Naive thymus-derived CD4-positive, alpha-beta T cell (primary cell): ENCODE measurements at regions of chr19 and their contacts with region 1.

Region 1: GRCh38 chr19:12139885-12140547 is at the start of gene ZNF20:
- DNase-seq: peak; percentile 68 to 90 (median 72)
- ATAC-seq: peak; percentile 95
- H3K4me3 ChIP-seq: peak within 1 kb of the TSS; percentile 74
- H3K4me3 Mint-ChIP-seq: peak within 1 kb of the TSS; percentile 82 to 96 (median 89)
- H3K27ac ChIP-seq: peak within 1 kb of the TSS; percentile 77
- H3K27ac Mint-ChIP-seq: peak within 1 kb of the TSS; percentile 40 to 96 (median 79)
- H3K4me1 ChIP-seq: peaks cover 18 to 24% of the 10 kb centered on the region in 2 donors
- H3K4me1 Mint-ChIP-seq: peaks cover 25 to 44% (median 35%) of the 10 kb centered on the region in 7 donors
- H3K27me3 ChIP-seq: no peaks in the 10 kb centered on the region
- H3K27me3 Mint-ChIP-seq: no peaks in the 10 kb centered on the region
- total RNA-seq, gene ZNF20: 1.2 to 6.7 (median 4.8) TPM

Region 2: GRCh38 chr19:10769533-10770491 is 1370.2 kb before region 1 on chr19:
- CTCF ChIA-PET with region 1: no interaction called
- POLR2A ChIA-PET with region 1: no interaction called
- intact Hi-C with region 1: no loop called
- DNase-seq: peak in 6 of 9 donors; percentile 21 to 49 (median 38)
- ATAC-seq: no peak
- H3K4me3 ChIP-seq: no peak overlapping the region
- H3K4me3 Mint-ChIP-seq: no peak overlapping the region
- H3K27ac ChIP-seq: peak overlapping the region; percentile 29
- H3K27ac Mint-ChIP-seq: peak overlapping the region in 8 of 9 donors; percentile 20 to 79 (median 68)
- H3K4me1 ChIP-seq: peaks cover 0 to 4% of the 10 kb centered on the region in 2 donors
- H3K4me1 Mint-ChIP-seq: peaks cover 14 to 42% (median 32%) of the 10 kb centered on the region in 7 donors
- H3K27me3 ChIP-seq: no peaks in the 10 kb centered on the region
- H3K27me3 Mint-ChIP-seq: no peaks in the 10 kb centered on the region

Region 3: DNA sequence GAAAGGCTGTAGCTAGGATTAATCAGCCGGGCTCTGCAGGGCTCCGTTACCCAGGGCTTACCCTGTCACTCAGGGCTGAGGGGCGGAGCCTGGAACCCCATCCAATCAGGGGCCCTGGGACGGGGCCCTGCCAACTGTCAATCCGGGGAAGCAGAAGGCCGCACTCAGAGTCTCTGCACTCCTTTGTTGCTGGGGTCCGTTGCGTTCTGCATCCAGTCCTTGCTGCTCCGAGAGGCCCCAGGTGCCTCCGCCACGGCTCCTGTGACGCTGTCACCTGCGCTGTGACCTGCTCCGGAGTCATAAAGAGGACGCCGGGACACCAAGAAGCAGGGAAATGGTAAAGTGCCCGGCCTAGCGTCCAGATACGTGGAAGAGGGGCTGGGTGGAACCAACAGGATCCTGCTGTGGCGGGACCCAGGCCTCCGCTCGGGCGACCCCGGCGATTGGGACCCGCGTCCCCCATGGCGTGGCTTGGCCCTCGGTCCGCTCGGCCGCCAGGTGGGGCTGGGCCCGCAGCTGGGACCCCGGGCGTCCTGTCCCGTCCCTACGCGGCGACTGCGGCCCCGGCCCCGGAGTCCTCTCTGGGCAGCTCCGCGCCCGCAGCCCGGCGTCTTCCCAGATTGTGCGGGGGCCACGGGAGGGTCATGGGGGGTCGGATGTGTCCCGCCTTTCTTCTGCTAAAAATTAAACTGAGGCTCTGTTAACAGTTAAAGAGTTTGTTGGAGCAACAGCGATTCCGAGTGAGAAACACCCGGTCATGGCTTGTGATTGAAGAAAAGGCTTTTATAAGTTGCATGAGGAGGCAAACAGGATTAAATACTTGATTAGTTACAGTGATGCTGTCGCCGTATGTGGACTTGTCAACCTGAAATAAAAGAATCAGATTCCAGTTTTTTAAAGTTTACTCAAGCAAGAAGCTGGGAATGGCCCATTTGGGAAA is 341.4 kb before region 1 on chr19 and contains the start of gene ZNF491:
- CTCF ChIA-PET with region 1: interaction called, 20 read pairs
- POLR2A ChIA-PET with region 1: no interaction called
- intact Hi-C with region 1: loop called in 1 of 2 experiments (anchors 1 kb)
- DNase-seq: peak; percentile 66 to 84 (median 79)
- ATAC-seq: peak; percentile 98
- H3K4me3 ChIP-seq: peak within 1 kb of the TSS; percentile 71
- H3K4me3 Mint-ChIP-seq: peak within 1 kb of the TSS; percentile 82 to 95 (median 92)
- H3K27ac ChIP-seq: peak within 1 kb of the TSS; percentile 82
- H3K27ac Mint-ChIP-seq: peak within 1 kb of the TSS; percentile 45 to 94 (median 91)
- H3K4me1 ChIP-seq: peaks cover 8 to 12% of the 10 kb centered on the region in 2 donors
- H3K4me1 Mint-ChIP-seq: peaks cover 12 to 29% (median 20%) of the 10 kb centered on the region in 7 donors
- H3K27me3 ChIP-seq: no peaks in the 10 kb centered on the region
- H3K27me3 Mint-ChIP-seq: no peaks in the 10 kb centered on the region
- total RNA-seq, gene ZNF491: 0.92 to 6.1 (median 1.9) TPM

Region 4: GRCh38 chr19:11887611-11888531 is 252.1 kb before region 1 on chr19 and contains the start of gene ZNF69:
- CTCF ChIA-PET with region 1: interaction called, 5 read pairs
- POLR2A ChIA-PET with region 1: no interaction called
- intact Hi-C with region 1: loop called in 1 of 2 experiments (anchors 1 kb)
- DNase-seq: peak; percentile 25 to 64 (median 55)
- ATAC-seq: peak; percentile 87
- H3K4me3 ChIP-seq: peak within 1 kb of the TSS; percentile 86
- H3K4me3 Mint-ChIP-seq: peak within 1 kb of the TSS; percentile 88 to 95 (median 94)
- H3K27ac ChIP-seq: peak within 1 kb of the TSS; percentile 71
- H3K27ac Mint-ChIP-seq: peak within 1 kb of the TSS; percentile 85 to 92 (median 90)
- H3K4me1 ChIP-seq: peaks cover 5 to 9% of the 10 kb centered on the region in 2 donors
- H3K4me1 Mint-ChIP-seq: peaks cover 20 to 42% (median 27%) of the 10 kb centered on the region in 7 donors
- H3K27me3 ChIP-seq: no peaks in the 10 kb centered on the region
- H3K27me3 Mint-ChIP-seq: peaks cover 0 to 3% (median 0%) of the 10 kb centered on the region in 5 donors
- total RNA-seq, gene ZNF69: 1.4 to 12.1 (median 5.0) TPM

Region 5: DNA sequence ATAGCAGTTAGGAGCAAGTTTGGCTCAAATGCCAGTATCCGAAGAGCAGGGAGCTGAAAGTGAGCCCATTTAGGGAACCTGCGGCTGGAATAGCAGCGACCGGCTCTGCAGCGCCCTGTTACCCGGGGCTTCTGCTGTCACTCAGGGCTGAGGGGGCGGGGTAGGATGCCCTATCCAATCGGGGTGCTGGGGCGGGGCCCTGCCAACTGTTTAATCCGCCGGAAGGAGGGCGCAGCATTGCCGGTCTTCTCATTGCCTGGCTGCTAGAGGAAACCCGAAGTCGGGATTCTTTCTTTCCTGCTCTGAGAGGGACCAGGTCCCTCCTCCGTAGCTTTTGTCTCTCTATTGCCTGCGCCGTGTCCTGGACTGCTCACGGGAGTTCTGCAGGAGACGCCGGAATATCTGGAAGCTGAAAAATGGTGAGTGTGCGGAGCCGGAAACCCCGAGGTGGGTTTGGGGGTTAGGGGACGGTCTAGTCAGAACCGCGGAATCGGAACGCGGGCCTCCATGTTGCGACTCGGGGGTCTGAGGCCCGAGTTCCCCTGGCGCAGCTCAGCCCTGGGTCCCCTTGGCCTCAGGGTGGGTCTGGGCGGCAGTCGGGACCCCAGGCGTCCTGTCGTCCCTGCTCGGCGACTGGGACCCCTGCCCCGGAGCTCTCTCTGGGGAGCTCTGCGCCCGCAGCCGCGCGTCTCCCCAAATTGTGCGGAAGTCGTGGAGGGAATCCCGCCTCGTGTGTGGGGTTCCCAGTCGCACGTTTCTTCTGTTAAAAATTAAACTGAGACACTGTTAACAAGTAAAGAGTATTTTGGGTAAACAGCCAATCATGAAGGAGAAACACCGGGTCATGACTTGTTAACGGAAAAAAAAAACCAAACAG is 152.4 kb before region 1 on chr19:
- CTCF ChIA-PET with region 1: no interaction called
- POLR2A ChIA-PET with region 1: interaction called, 3 read pairs
- intact Hi-C with region 1: loop called (anchors 1 kb)
- DNase-seq: peak; percentile 73 to 90 (median 87)
- ATAC-seq: peak; percentile 95
- H3K4me3 ChIP-seq: peak overlapping the region; percentile 98
- H3K4me3 Mint-ChIP-seq: peak overlapping the region; percentile 84 to 99 (median 96)
- H3K27ac ChIP-seq: peak overlapping the region; percentile 88
- H3K27ac Mint-ChIP-seq: peak overlapping the region; percentile 70 to 97 (median 96)
- H3K4me1 ChIP-seq: peaks cover 0 to 8% of the 10 kb centered on the region in 2 donors
- H3K4me1 Mint-ChIP-seq: peaks cover 15 to 39% (median 28%) of the 10 kb centered on the region in 7 donors
- H3K27me3 ChIP-seq: no peaks in the 10 kb centered on the region
- H3K27me3 Mint-ChIP-seq: peaks cover 0 to 2% (median 0%) of the 10 kb centered on the region in 5 donors

Region 6: DNA sequence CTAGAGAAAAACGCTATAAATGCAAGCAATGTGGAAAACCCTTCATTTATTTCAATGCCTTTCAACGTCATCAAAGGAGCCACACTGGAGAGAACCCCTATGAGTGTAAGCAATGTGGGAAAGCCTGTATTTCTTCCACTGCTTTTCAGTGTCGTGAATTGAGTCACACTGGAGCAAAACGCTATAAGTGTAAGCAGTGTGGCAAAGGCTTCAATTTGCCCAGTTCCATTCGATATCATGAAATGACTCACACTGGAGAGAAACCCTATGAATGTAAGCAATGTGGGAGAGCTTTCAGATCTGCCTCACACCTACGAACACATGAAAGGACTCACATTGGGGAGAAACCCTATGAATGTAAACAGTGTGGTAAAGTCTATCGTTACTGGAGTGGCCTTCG is 27.3 kb before region 1 on chr19:
- CTCF ChIA-PET with region 1: no interaction called
- POLR2A ChIA-PET with region 1: no interaction called
- intact Hi-C with region 1: no loop called
- DNase-seq: no peak
- ATAC-seq: no peak
- H3K4me3 ChIP-seq: no peak overlapping the region
- H3K4me3 Mint-ChIP-seq: no peak overlapping the region
- H3K27ac ChIP-seq: no peak overlapping the region
- H3K27ac Mint-ChIP-seq: no peak overlapping the region
- H3K4me1 ChIP-seq: no peaks in the 10 kb centered on the region
- H3K4me1 Mint-ChIP-seq: no peaks in the 10 kb centered on the region
- H3K27me3 ChIP-seq: no peaks in the 10 kb centered on the region
- H3K27me3 Mint-ChIP-seq: no peaks in the 10 kb centered on the region

Region 7: GRCh38 chr19:12126707-12127106 is 13.3 kb before region 1 on chr19:
- CTCF ChIA-PET with region 1: no interaction called
- POLR2A ChIA-PET with region 1: no interaction called
- intact Hi-C with region 1: loop called in 1 of 2 experiments (anchors 1 kb)
- DNase-seq: peak in 2 of 9 donors; percentile 9 to 13
- ATAC-seq: no peak
- H3K4me3 ChIP-seq: no peak overlapping the region
- H3K4me3 Mint-ChIP-seq: no peak overlapping the region
- H3K27ac ChIP-seq: no peak overlapping the region
- H3K27ac Mint-ChIP-seq: no peak overlapping the region
- H3K4me1 ChIP-seq: no peaks in the 10 kb centered on the region
- H3K4me1 Mint-ChIP-seq: no peaks in the 10 kb centered on the region
- H3K27me3 ChIP-seq: no peaks in the 10 kb centered on the region
- H3K27me3 Mint-ChIP-seq: peaks cover 0 to 6% (median 0%) of the 10 kb centered on the region in 5 donors

Region 8: GRCh38 chr19:12333162-12334159 is 193.4 kb after region 1 on chr19 and contains the start of gene ZNF563:
- CTCF ChIA-PET with region 1: no interaction called
- POLR2A ChIA-PET with region 1: interaction called, 4 read pairs
- intact Hi-C with region 1: loop called in 1 of 2 experiments (anchors 5 kb)
- DNase-seq: peak; percentile 91 to 99 (median 98)
- ATAC-seq: peak; percentile 99
- H3K4me3 ChIP-seq: peak within 1 kb of the TSS; percentile 61
- H3K4me3 Mint-ChIP-seq: peak within 1 kb of the TSS; percentile 90 to 100 (median 96)
- H3K27ac ChIP-seq: peak within 1 kb of the TSS; percentile 92
- H3K27ac Mint-ChIP-seq: peak within 1 kb of the TSS; percentile 92 to 99 (median 97)
- H3K4me1 ChIP-seq: peaks cover 9 to 22% of the 10 kb centered on the region in 2 donors
- H3K4me1 Mint-ChIP-seq: peaks cover 23 to 49% (median 40%) of the 10 kb centered on the region in 7 donors
- H3K27me3 ChIP-seq: no peaks in the 10 kb centered on the region
- H3K27me3 Mint-ChIP-seq: no peaks in the 10 kb centered on the region
- total RNA-seq, gene ZNF563: 2.8 to 23.2 (median 6.1) TPM